ENCODE measurements at regions of chr14 and their contacts with region 1.

Region 1: DNA sequence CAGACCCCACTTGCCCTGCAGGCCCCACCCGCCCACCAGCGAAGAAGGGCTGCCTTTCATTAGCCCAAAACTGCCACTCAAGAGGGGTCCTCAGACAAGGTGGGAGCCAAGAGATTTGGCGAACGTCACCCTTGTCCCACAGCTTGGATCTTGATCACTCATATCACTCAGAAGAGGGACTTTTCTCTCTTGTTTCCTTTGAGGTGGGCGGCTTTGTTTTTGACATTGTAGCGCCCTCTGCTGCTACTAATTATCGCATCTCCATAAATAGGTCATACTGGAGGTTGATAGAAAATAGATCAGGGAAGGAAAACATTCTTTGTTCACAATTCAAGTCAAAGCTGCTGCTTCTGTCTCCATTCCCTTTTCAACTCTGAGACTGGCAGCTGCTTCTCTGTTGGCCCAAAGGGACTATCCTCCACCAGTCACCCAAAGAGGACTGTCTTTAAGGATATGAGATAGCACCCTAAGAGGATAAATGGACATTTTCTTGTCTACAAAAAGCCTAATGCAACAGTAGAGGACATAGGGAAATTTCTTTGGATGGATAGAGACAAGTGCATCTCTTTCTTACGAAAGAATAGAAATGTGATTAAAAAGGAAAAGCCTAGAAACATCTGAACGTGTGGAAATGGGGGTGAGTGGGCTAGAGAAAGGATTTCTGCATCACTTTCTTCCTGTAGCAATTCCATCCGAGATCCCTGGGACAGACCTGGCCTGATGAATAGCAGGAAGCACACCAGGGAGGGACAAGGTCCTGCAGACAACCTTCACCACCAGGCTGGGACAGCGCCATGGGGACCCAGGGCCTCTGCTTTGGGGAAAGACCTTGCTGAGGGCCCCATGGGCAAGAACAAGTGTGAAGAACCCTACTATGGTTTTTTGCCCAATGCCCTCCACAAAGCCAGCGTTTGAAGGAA is 115.8 kb downstream of the DAD1 start:
- DNase-seq: peak in 1 of 5 donors; percentile 28
- ATAC-seq: peak in 3 of 4 donors; percentile 39 to 55 (median 48)
- H3K4me3 ChIP-seq: no peak overlapping the region
- H3K27ac ChIP-seq: no peak overlapping the region
- H3K4me1 ChIP-seq: peaks cover 0 to 67% (median 21%) of the 10 kb centered on the region in 12 donors
- H3K27me3 ChIP-seq: peaks cover 0 to 9% (median 0%) of the 10 kb centered on the region in 9 donors
- CTCF ChIP-seq: peak; percentile 28 to 65 (median 52)
- POLR2A ChIP-seq: no peak

Region 2: GRCh38 chr14:22358726-22359125 is 114.5 kb before region 1 on chr14:
- intact Hi-C with region 1: no loop called
- DNase-seq: no peak
- ATAC-seq: no peak
- H3K4me3 ChIP-seq: no peak overlapping the region
- H3K27ac ChIP-seq: no peak overlapping the region
- H3K4me1 ChIP-seq: no peaks in the 10 kb centered on the region
- H3K27me3 ChIP-seq: no peaks in the 10 kb centered on the region
- CTCF ChIP-seq: no peak
- POLR2A ChIP-seq: no peak

Region 3: DNA sequence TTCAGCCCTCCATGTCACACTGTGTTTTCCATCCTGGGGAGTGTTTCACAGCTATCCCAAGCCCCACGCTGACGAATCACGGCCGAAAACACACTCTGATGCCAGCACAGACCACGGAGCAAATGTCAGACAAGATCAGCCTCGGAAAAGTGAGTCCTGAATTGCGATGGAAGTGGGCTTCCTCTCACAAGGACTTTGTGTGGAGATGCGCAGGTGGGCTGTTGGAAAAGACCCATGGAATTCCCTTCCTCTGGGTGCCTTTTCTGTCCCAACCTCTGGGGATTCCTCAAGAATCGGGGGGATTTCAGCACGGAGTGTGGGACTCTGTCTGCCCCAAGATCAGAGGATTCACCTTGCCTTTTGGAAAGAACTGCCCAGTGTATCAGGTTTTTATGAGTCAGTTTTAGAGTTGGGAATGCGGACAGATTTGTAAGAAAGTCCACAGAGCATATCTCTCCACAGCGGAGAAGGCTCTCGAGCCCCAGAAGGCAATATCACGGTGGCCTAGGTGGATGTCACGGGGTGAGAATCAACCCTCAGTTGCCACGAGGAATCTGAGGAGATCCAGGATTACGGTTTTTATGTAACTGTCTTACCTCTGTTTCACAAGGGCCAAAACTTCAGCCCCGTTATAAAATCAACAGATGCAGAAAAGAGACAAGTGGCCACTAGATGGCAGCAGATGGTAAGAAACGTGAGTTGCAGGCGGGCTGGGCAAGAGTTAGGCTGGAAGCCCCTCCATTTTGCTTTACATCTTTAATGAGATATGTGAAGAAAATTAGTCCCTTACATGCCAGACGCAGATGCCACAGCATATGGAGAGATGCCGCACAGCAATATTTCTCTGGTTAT is 86.0 kb before region 1 on chr14:
- intact Hi-C with region 1: loop called in 9 of 10 experiments (anchors 1 to 5 kb)
- DNase-seq: peak in 4 of 5 donors; percentile 56 to 66 (median 60)
- ATAC-seq: peak in 3 of 4 donors; percentile 50 to 66 (median 60)
- H3K4me3 ChIP-seq: no peak overlapping the region
- H3K27ac ChIP-seq: no peak overlapping the region
- H3K4me1 ChIP-seq: peaks cover 0 to 8% (median 0%) of the 10 kb centered on the region in 12 donors
- H3K27me3 ChIP-seq: peaks cover 0 to 29% (median 0%) of the 10 kb centered on the region in 9 donors
- CTCF ChIP-seq: peak; percentile 67 to 90 (median 84)
- POLR2A ChIP-seq: no peak

Region 4: DNA sequence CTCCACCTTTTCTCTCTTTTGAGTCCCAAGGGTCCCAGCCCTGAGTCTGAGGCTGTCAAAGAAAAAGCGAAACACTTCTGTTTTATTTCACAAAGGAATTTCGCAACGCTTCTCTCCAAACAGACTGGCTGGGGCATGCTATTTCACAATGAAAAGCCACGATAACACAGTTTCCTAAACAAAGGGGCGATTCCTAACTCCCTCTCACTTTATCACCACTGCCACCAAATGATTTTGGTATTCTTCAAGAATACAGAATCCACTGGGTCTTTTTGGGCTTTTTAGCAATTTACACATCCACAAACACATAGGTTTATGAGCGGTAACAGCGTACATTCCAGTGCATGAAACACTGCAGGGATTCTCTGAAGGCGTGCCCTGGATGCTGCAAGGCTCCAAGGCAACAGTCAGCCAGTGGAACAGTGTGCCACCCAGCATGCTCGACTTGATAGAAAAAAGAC is 45.4 kb before region 1 on chr14:
- intact Hi-C with region 1: loop called in 2 of 10 experiments (anchors 5 kb)
- DNase-seq: peak in 2 of 5 donors; percentile 10 to 32
- ATAC-seq: peak in 3 of 4 donors; percentile 63 to 81 (median 72)
- H3K4me3 ChIP-seq: peak overlapping the region in 4 of 12 donors; percentile 10 to 30 (median 14)
- H3K27ac ChIP-seq: peak overlapping the region in 2 of 12 donors; percentile 19 to 61
- H3K4me1 ChIP-seq: peaks cover 0 to 42% (median 19%) of the 10 kb centered on the region in 12 donors
- H3K27me3 ChIP-seq: no peaks in the 10 kb centered on the region
- CTCF ChIP-seq: no peak
- POLR2A ChIP-seq: no peak

Region 5: GRCh38 chr14:22536853-22537338 is 63.7 kb after region 1 on chr14:
- intact Hi-C with region 1: loop called in 2 of 10 experiments (anchors 10 kb)
- DNase-seq: peak in 4 of 5 donors; percentile 57 to 85 (median 70)
- ATAC-seq: peak; percentile 76 to 97 (median 94)
- H3K4me3 ChIP-seq: peak overlapping the region in 1 of 12 donors; percentile 15
- H3K27ac ChIP-seq: peak overlapping the region in 10 of 12 donors; percentile 9 to 87 (median 40)
- H3K4me1 ChIP-seq: peaks cover 0 to 94% (median 27%) of the 10 kb centered on the region in 12 donors
- H3K27me3 ChIP-seq: no peaks in the 10 kb centered on the region
- CTCF ChIP-seq: no peak
- POLR2A ChIP-seq: no peak

Measured in heart left ventricle (tissue), 16 donors.